Endothelial cell of umbilical vein (primary cell): ENCODE measurements at regions of chr2 and their contacts with region 1.

Region 1: GRCh38 chr2:230068016-230068650 is 591 bp downstream of the SLC16A14 start:
- DNase-seq: peak; percentile 50
- H3K4me3 ChIP-seq: peak overlapping the region; percentile 39 to 45 (median 44)
- H3K27ac ChIP-seq: no peak overlapping the region
- H3K4me1 ChIP-seq: peaks cover 7% of the 10 kb centered on the region
- H3K27me3 ChIP-seq: peaks cover 1 to 7% of the 10 kb centered on the region in 2 experiments
- CTCF ChIP-seq: peak in 1 of 2 donors; percentile 38
- POLR2A ChIP-seq: no peak

Region 2: GRCh38 chr2:229753330-229753729 is 314.8 kb before region 1 on chr2:
- CTCF ChIA-PET with region 1: no interaction called
- POLR2A ChIA-PET with region 1: no interaction called
- dilution Hi-C with region 1: no loop called
- intact Hi-C with region 1: no loop called
- DNase-seq: no peak
- H3K4me3 ChIP-seq: no peak overlapping the region
- H3K27ac ChIP-seq: no peak overlapping the region
- H3K4me1 ChIP-seq: no peaks in the 10 kb centered on the region
- H3K27me3 ChIP-seq: no peaks in the 10 kb centered on the region
- CTCF ChIP-seq: no peak
- POLR2A ChIP-seq: no peak

Region 3: GRCh38 chr2:229780856-229781773 is 287.0 kb before region 1 on chr2:
- CTCF ChIA-PET with region 1: interaction called, 22 read pairs
- POLR2A ChIA-PET with region 1: no interaction called
- dilution Hi-C with region 1: no loop called
- intact Hi-C with region 1: loop called (anchors 5 kb)
- DNase-seq: peak; percentile 76
- H3K4me3 ChIP-seq: no peak overlapping the region
- H3K27ac ChIP-seq: peak overlapping the region; percentile 31
- H3K4me1 ChIP-seq: peaks cover 13% of the 10 kb centered on the region
- H3K27me3 ChIP-seq: no peaks in the 10 kb centered on the region
- CTCF ChIP-seq: peak; percentile 74 to 75
- POLR2A ChIP-seq: no peak

Region 4: GRCh38 chr2:229955663-229956062 is 112.5 kb before region 1 on chr2:
- CTCF ChIA-PET with region 1: no interaction called
- POLR2A ChIA-PET with region 1: no interaction called
- dilution Hi-C with region 1: no loop called
- intact Hi-C with region 1: no loop called
- DNase-seq: no peak
- H3K4me3 ChIP-seq: no peak overlapping the region
- H3K27ac ChIP-seq: no peak overlapping the region
- H3K4me1 ChIP-seq: no peaks in the 10 kb centered on the region
- H3K27me3 ChIP-seq: no peaks in the 10 kb centered on the region
- CTCF ChIP-seq: no peak
- POLR2A ChIP-seq: no peak

Region 5: GRCh38 chr2:230007931-230008707 is 60.0 kb before region 1 on chr2:
- CTCF ChIA-PET with region 1: interaction called, 32 read pairs
- POLR2A ChIA-PET with region 1: no interaction called
- dilution Hi-C with region 1: no loop called
- intact Hi-C with region 1: loop called (anchors 1 kb)
- DNase-seq: peak; percentile 78
- H3K4me3 ChIP-seq: peak overlapping the region in 1 of 3 experiments; percentile 20
- H3K27ac ChIP-seq: no peak overlapping the region
- H3K4me1 ChIP-seq: peaks cover 7% of the 10 kb centered on the region
- H3K27me3 ChIP-seq: no peaks in the 10 kb centered on the region
- CTCF ChIP-seq: peak; percentile 67 to 78
- POLR2A ChIP-seq: no peak

Region 6: DNA sequence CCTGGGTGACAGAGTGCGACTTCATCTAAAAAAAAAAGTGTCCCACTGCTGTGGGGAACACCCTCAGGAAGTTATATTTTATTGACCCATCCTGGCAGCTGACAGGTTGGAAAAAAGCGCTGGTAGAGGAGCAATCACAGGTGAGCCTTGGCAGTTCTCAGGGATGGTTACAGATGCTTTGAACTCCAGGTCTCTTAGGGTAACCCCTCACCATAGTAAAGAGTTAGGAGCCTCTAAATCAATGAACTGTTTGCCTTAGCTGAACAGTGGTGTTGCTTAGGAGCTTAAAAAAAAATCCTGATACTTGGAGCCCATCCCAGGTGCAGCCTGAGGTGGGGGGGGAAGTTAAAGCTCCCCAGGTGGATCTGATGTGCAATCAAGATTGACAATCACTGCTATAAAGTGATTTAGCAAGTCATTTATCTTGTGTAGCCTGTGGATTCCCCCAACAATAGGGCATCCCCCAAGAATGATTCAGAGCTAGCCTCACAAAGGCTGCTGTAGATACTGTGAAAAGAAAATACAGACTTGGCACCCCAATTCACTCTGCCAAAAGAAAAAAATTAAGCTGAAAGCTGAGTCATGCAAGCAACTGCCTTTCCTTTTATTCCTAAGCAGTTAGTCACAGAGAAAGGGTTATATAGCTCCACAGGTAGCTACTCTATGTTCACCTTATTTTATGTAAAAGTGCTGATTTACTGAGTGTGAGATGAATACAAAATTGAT is 14.2 kb before region 1 on chr2:
- CTCF ChIA-PET with region 1: interaction called, 39 read pairs
- POLR2A ChIA-PET with region 1: no interaction called
- dilution Hi-C with region 1: no loop called
- intact Hi-C with region 1: no loop called
- DNase-seq: no peak
- H3K4me3 ChIP-seq: no peak overlapping the region
- H3K27ac ChIP-seq: no peak overlapping the region
- H3K4me1 ChIP-seq: no peaks in the 10 kb centered on the region
- H3K27me3 ChIP-seq: no peaks in the 10 kb centered on the region
- CTCF ChIP-seq: no peak
- POLR2A ChIP-seq: no peak

Region 7: DNA sequence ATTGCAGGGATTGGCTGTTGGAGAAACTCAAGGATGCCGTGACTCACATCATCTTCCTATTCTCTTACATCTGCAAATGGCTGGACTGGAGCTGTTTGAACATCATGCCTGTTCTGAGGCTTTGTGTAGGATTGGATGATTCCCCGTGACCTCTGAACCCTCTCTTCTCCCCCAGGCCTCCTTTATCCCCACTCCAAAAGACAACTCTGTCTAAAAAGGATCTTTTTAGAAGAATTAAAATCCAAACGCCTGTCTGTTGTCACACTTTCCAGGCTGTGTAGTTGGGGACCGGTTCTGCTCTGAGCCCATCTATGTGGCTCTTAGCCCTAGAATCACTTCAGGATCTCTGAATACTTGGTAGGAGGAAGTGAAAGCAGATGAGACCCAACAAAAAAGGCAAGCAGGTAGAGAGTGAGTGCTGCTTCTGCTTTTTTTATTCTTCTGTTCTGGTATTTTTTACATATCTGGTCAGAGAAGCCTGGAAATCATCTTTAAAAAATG is 158.0 kb after region 1 on chr2:
- CTCF ChIA-PET with region 1: no interaction called
- POLR2A ChIA-PET with region 1: no interaction called
- dilution Hi-C with region 1: no loop called
- intact Hi-C with region 1: no loop called
- DNase-seq: no peak
- H3K4me3 ChIP-seq: no peak overlapping the region
- H3K27ac ChIP-seq: no peak overlapping the region
- H3K4me1 ChIP-seq: peaks cover 7% of the 10 kb centered on the region
- H3K27me3 ChIP-seq: no peaks in the 10 kb centered on the region
- CTCF ChIP-seq: no peak
- POLR2A ChIP-seq: no peak